ENCODE measurements at regions of chr12 and their contacts with region 1.

Region 1: GRCh38 chr12:120292661-120293531 is at the start of gene RNU4-1:
- DNase-seq: peak; percentile 89
- H3K4me3 ChIP-seq: peak within 1 kb of the TSS; percentile 22 to 64 (median 45)
- H3K27ac ChIP-seq: peak within 1 kb of the TSS; percentile 100
- H3K4me1 ChIP-seq: peaks cover 9% of the 10 kb centered on the region
- H3K27me3 ChIP-seq: no peaks in the 10 kb centered on the region
- CTCF ChIP-seq: no peak
- POLR2A ChIP-seq: peak; percentile 100
- total RNA-seq, gene RNU4-1: 2,141 and 7,155 TPM in 2 replicates

Region 2: GRCh38 chr12:120167529-120168095 is 125.3 kb before region 1 on chr12:
- CTCF ChIA-PET with region 1: no interaction called
- POLR2A ChIA-PET with region 1: interaction called, 20 read pairs
- dilution Hi-C with region 1: no loop called
- intact Hi-C with region 1: no loop called
- DNase-seq: peak; percentile 54
- H3K4me3 ChIP-seq: no peak overlapping the region
- H3K27ac ChIP-seq: peak overlapping the region; percentile 62
- H3K4me1 ChIP-seq: peaks cover 12% of the 10 kb centered on the region
- H3K27me3 ChIP-seq: no peaks in the 10 kb centered on the region
- CTCF ChIP-seq: no peak
- POLR2A ChIP-seq: no peak

Region 3: GRCh38 chr12:120200364-120200800 is 92.5 kb before region 1 on chr12:
- CTCF ChIA-PET with region 1: interaction called, 20 read pairs
- POLR2A ChIA-PET with region 1: interaction called, 141 read pairs
- dilution Hi-C with region 1: no loop called
- intact Hi-C with region 1: loop called (anchors 1 kb)
- DNase-seq: peak; percentile 27
- H3K4me3 ChIP-seq: peak overlapping the region; percentile 31 to 84 (median 78)
- H3K27ac ChIP-seq: peak overlapping the region; percentile 34
- H3K4me1 ChIP-seq: peaks cover 42% of the 10 kb centered on the region
- H3K27me3 ChIP-seq: no peaks in the 10 kb centered on the region
- CTCF ChIP-seq: no peak
- POLR2A ChIP-seq: no peak

Region 4: GRCh38 chr12:120249875-120250795 is 42.8 kb before region 1 on chr12:
- CTCF ChIA-PET with region 1: no interaction called
- POLR2A ChIA-PET with region 1: interaction called, 15 read pairs
- dilution Hi-C with region 1: no loop called
- intact Hi-C with region 1: no loop called
- DNase-seq: peak; percentile 53
- H3K4me3 ChIP-seq: peak overlapping the region in 1 of 3 experiments; percentile 5
- H3K27ac ChIP-seq: peak overlapping the region; percentile 56
- H3K4me1 ChIP-seq: peaks cover 66% of the 10 kb centered on the region
- H3K27me3 ChIP-seq: no peaks in the 10 kb centered on the region
- CTCF ChIP-seq: no peak
- POLR2A ChIP-seq: peak; percentile 43

Region 5: DNA sequence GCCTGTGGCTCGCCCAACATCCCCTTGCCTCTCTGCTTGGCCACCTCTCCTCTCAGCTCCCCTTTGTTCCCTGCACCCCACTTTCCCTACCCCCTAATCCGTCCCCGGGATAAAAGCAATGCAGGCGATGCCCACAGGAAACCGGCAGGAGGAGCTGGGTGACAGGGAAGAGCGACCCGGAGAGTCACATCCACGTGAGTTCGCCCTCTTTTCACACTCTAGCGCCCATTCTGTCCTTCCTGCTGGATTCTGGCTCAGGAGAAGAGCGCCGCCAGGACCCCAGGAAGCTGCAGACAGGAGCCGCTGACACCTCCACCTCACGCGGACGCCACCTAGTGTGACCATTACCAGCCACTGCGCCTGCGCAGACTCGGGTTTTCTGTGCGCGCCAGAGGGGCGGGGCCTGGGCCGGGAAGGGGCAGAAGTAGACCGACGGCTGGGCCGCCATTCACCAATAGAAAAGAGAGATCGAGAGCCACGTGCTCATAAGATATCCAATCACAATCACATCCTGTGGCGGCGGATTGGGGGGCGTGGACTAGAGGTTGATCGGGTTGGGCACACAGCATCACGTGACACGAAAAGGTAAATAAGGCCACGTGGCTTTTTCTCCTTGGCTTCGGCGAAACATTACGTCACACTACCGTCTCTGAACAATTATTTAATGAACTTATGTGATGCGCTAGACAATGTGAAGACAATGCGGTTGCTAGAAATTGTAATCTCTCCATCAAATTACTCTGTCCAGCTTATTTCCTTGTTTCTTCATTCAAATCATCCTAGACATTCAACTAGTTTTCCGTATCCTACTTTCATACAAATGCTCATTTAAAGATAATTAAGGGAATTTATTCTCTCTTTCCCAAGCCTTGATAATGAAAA is 24.6 kb after region 1 on chr12:
- CTCF ChIA-PET with region 1: interaction called, 3 read pairs
- POLR2A ChIA-PET with region 1: interaction called, 14 read pairs
- dilution Hi-C with region 1: no loop called
- intact Hi-C with region 1: loop called (anchors 1 kb)
- DNase-seq: peak; percentile 100
- H3K4me3 ChIP-seq: peak overlapping the region; percentile 21 to 63 (median 56)
- H3K27ac ChIP-seq: peak overlapping the region; percentile 61
- H3K4me1 ChIP-seq: peaks cover 10% of the 10 kb centered on the region
- H3K27me3 ChIP-seq: peaks cover 0 to 6% of the 10 kb centered on the region in 2 experiments
- CTCF ChIP-seq: peak; percentile 41 to 61
- POLR2A ChIP-seq: peak; percentile 89

Region 6: DNA sequence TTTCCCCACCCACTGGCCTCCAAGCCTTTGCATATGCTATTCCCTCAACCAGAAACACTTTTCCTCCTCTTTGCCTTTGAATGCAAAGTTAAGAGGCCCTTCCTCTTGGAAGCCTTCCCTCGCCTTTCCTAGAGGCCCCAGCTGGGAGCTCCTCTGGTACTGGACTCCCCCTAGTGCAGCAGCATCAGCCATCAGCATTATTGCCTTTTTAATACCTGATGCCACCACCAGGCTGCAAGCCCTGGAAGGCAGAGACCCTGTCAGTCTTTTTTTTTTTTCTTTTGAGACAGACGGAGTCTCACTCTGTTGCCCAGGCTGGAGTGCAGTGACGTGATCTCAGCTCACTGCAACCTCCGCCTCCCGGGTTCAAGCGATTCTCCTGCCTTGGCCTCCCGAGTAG is 53.8 kb after region 1 on chr12:
- CTCF ChIA-PET with region 1: no interaction called
- POLR2A ChIA-PET with region 1: no interaction called
- dilution Hi-C with region 1: no loop called
- intact Hi-C with region 1: no loop called
- DNase-seq: no peak
- H3K4me3 ChIP-seq: no peak overlapping the region
- H3K27ac ChIP-seq: no peak overlapping the region
- H3K4me1 ChIP-seq: no peaks in the 10 kb centered on the region
- H3K27me3 ChIP-seq: peaks cover 3 to 9% of the 10 kb centered on the region in 2 experiments
- CTCF ChIP-seq: no peak
- POLR2A ChIP-seq: no peak